Posterior vena cava (tissue), 2 donors: ENCODE measurements at regions of chr3 and their contacts with region 1.

Region 1: GRCh38 chr3:128969993-128970739 is 23.7 kb downstream of the CFAP92 start:
- DNase-seq: no peak

Region 2: DNA sequence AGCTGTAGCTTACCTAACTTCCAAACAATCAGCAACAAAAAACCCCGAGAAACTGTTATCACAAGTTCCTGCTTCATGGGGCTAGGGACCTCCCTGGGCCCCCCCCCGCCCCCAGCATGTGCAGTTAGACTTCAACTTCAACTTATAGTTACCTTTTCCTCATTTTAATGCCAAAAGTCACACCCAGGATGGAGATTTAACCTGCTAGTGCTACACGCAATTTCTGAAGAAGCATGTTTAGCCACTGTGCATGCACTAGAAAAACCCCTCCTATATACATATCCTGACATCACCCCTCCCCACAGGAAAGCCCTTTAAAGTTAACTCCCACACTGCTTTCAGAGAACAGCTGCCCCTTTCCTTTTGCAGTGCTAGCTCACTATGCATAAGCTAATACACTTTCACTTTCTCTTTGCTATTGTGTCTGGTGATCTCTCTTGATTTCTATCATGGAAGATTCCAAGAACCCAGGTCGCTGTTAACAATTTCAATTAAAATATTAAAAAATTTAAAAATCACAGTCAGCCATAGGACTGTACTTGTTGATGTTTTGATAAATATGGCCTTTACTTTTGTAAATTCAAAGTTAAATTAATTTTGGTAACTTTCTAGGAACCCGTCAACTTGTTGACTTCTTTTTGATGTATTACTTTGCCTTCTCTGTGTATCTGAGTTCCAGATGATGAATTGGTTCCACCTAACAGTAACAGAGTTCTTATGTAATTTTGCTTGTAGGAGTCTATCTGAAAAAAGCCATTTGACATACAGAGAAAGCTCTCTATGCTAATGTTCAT is 166.0 kb before region 1 on chr3:
- intact Hi-C with region 1: no loop called
- DNase-seq: no peak

Region 3: GRCh38 chr3:129016356-129016719 is 46.2 kb after region 1 on chr3:
- intact Hi-C with region 1: no loop called
- DNase-seq: no peak

Region 4: DNA sequence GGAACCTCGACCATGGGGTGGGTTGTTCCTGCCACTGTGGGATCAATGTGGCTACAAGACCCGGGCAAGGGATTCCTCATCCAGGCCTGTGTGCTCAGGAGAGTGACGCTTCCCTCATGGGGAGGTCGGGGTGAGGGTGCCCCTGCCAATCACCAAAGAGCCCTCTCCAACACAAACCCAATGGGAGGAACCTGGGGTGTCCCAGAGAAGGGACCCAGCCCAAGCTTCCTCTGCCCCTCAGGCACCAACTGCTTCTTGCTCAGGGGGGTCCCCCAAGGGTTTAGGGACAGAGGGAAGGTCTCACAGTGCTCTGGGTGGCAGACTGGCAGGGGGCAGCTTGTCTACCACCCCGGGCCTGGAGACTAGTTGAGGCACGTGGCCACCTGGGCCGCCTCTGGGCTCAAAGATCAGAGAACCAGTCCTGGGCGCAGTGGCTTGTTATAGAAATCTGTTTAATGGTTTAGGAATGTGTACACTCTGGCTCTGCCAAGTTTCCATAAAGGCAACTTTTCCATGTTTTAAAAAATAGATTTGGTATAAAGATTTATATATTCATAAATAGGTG is 117.1 kb after region 1 on chr3:
- intact Hi-C with region 1: loop called in 1 of 2 experiments (anchors 10 kb)
- DNase-seq: no peak

Region 5: GRCh38 chr3:130014526-130014925 is 1044.4 kb after region 1 on chr3:
- intact Hi-C with region 1: no loop called
- DNase-seq: no peak